ENCODE measurements at regions of chr9 and their contacts with region 1.

Region 1: GRCh38 chr9:129648092-129648763 is 6.3 kb upstream of the ASB6 start:
- DNase-seq: no peak
- ATAC-seq: no peak
- H3K4me3 ChIP-seq: no peak overlapping the region
- H3K4me3 Mint-ChIP-seq: no peak overlapping the region
- H3K27ac ChIP-seq: no peak overlapping the region
- H3K27ac Mint-ChIP-seq: no peak overlapping the region
- H3K4me1 ChIP-seq: no peaks in the 10 kb centered on the region
- H3K4me1 Mint-ChIP-seq: no peaks in the 10 kb centered on the region
- H3K27me3 ChIP-seq: peaks cover 0 to 15% of the 10 kb centered on the region in 2 experiments
- H3K27me3 Mint-ChIP-seq: peaks cover 0 to 4% of the 10 kb centered on the region in 2 donors

Region 2: GRCh38 chr9:129333953-129334724 is 314.1 kb before region 1 on chr9:
- CTCF ChIA-PET with region 1: no interaction called
- POLR2A ChIA-PET with region 1: no interaction called
- DNase-seq: peak in 11 of 35 experiments; percentile 8 to 44 (median 35)
- ATAC-seq: peak; percentile 42 to 62 (median 54)
- H3K4me3 ChIP-seq: peak overlapping the region; percentile 19 to 40
- H3K4me3 Mint-ChIP-seq: peak overlapping the region; percentile 57 to 84 (median 60)
- H3K27ac ChIP-seq: no peak overlapping the region
- H3K27ac Mint-ChIP-seq: peak overlapping the region; percentile 36 to 83
- H3K4me1 ChIP-seq: peaks cover 21 to 36% of the 10 kb centered on the region in 2 experiments
- H3K4me1 Mint-ChIP-seq: peaks cover 25 to 27% (median 27%) of the 10 kb centered on the region in 3 donors
- H3K27me3 ChIP-seq: peaks cover 0 to 34% of the 10 kb centered on the region in 2 experiments
- H3K27me3 Mint-ChIP-seq: peaks cover 0 to 14% of the 10 kb centered on the region in 2 donors

Region 3: GRCh38 chr9:129781991-129782390 is 133.8 kb after region 1 on chr9:
- CTCF ChIA-PET with region 1: interaction called, 3 to 12 read pairs
- POLR2A ChIA-PET with region 1: no interaction called
- DNase-seq: no peak
- ATAC-seq: no peak
- H3K4me3 ChIP-seq: no peak overlapping the region
- H3K4me3 Mint-ChIP-seq: no peak overlapping the region
- H3K27ac ChIP-seq: no peak overlapping the region
- H3K27ac Mint-ChIP-seq: no peak overlapping the region
- H3K4me1 ChIP-seq: peaks cover 0 to 12% of the 10 kb centered on the region in 2 experiments
- H3K4me1 Mint-ChIP-seq: peaks cover 8 to 10% (median 10%) of the 10 kb centered on the region in 3 donors
- H3K27me3 ChIP-seq: peaks cover 0 to 22% of the 10 kb centered on the region in 2 experiments
- H3K27me3 Mint-ChIP-seq: peaks cover 3 to 15% of the 10 kb centered on the region in 2 donors

Region 4: GRCh38 chr9:130408669-130409068 is 760.4 kb after region 1 on chr9:
- CTCF ChIA-PET with region 1: no interaction called
- POLR2A ChIA-PET with region 1: no interaction called
- DNase-seq: no peak
- ATAC-seq: no peak
- H3K4me3 ChIP-seq: no peak overlapping the region
- H3K4me3 Mint-ChIP-seq: no peak overlapping the region
- H3K27ac ChIP-seq: no peak overlapping the region
- H3K27ac Mint-ChIP-seq: no peak overlapping the region
- H3K4me1 ChIP-seq: no peaks in the 10 kb centered on the region
- H3K4me1 Mint-ChIP-seq: no peaks in the 10 kb centered on the region
- H3K27me3 ChIP-seq: peaks cover 0 to 13% of the 10 kb centered on the region in 2 experiments
- H3K27me3 Mint-ChIP-seq: no peaks in the 10 kb centered on the region

Measured in T-cell (primary cell).